ENCODE measurements at regions of chr12 and their contacts with region 1.

Region 1: GRCh38 chr12:132761032-132761920 is at the start of gene ANKLE2:
- DNase-seq: peak; percentile 84
- H3K4me3 Mint-ChIP-seq: peak within 1 kb of the TSS; percentile 96
- H3K27ac Mint-ChIP-seq: peak within 1 kb of the TSS; percentile 93
- H3K4me1 Mint-ChIP-seq: peaks cover 32% of the 10 kb centered on the region
- H3K27me3 Mint-ChIP-seq: no peaks in the 10 kb centered on the region
- total RNA-seq, gene ANKLE2: 88.6 to 89.3 TPM

Region 2: DNA sequence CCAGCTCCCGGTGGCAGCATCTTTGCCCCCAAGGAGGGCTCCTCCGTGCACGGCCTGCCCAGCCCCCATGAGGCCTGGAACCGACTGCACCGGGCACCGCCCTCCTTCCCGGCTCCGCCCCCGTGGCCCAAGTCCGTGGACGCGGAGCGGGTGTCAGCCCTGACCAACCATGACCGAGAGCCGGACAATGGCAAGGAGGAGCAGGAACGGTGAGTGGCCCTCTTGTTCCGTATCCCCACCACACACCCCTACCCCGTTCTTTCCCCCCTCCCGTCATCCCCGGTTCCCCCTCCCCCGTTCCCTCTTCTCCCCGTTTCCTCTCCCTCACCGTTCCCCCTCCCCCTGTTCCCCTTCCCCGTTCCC is 179.2 kb before region 1 on chr12:
- CTCF ChIA-PET with region 1: no interaction called
- POLR2A ChIA-PET with region 1: no interaction called
- DNase-seq: no peak
- H3K4me3 Mint-ChIP-seq: no peak overlapping the region
- H3K27ac Mint-ChIP-seq: no peak overlapping the region
- H3K4me1 Mint-ChIP-seq: no peaks in the 10 kb centered on the region
- H3K27me3 Mint-ChIP-seq: no peaks in the 10 kb centered on the region

Region 3: DNA sequence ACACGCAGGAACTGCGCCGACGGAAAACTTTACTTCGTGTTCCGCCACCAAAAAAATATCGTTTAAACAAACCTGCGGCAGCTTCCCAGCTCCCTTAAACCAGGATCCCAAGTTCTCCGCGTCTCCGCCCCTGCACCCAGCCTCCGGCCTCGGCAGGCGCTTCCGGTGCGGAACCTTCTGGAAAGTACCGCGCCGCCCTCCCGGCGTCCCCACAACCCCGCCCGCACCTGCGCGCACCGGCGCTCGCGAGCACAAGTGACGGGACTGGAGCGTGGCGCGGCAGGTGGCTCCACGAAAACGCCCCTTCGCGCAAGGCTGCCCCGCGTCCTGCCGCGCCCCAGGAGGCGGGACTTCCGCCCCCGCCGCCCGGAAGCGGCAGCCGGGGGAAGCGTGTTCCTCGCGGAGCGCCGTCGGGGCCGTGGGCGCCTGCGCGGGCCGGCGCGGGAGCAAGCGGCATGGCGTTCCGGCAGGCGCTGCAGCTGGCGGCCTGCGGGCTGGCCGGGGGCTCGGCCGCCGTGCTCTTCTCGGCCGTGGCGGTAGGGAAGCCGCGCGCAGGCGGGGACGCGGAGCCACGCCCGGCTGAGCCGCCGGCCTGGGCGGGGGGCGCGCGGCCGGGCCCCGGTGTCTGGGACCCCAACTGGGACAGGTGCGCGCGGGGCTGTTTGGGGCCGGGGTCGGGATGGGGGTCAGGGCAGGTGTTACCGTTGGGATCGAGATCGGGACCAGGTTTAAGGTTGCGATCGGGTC is 50.7 kb before region 1 on chr12 and contains the start of gene PGAM5:
- CTCF ChIA-PET with region 1: no interaction called
- POLR2A ChIA-PET with region 1: interaction called, 12 read pairs
- DNase-seq: peak; percentile 92
- H3K4me3 Mint-ChIP-seq: peak within 1 kb of the TSS; percentile 82
- H3K27ac Mint-ChIP-seq: peak within 1 kb of the TSS; percentile 71
- H3K4me1 Mint-ChIP-seq: peaks cover 25% of the 10 kb centered on the region
- H3K27me3 Mint-ChIP-seq: no peaks in the 10 kb centered on the region
- total RNA-seq, gene PGAM5: 32.5 to 35.1 TPM

Region 4: GRCh38 chr12:132828706-132829534 is 67.6 kb after region 1 on chr12 and contains the start of gene GOLGA3:
- CTCF ChIA-PET with region 1: no interaction called
- POLR2A ChIA-PET with region 1: interaction called, 18 read pairs
- DNase-seq: peak; percentile 95
- H3K4me3 Mint-ChIP-seq: peak within 1 kb of the TSS; percentile 93
- H3K27ac Mint-ChIP-seq: peak within 1 kb of the TSS; percentile 99
- H3K4me1 Mint-ChIP-seq: peaks cover 54% of the 10 kb centered on the region
- H3K27me3 Mint-ChIP-seq: no peaks in the 10 kb centered on the region
- total RNA-seq, gene GOLGA3: 46.2 to 46.5 TPM

Measured in activated CD4-positive, alpha-beta memory T cell treated with anti-CD3 and anti-CD28 coated beads, Interleukin-2, amount 10 ng/mL, durations not matched to agents 7 days and 5 days (primary cell).